ENCODE measurements at regions of chr5 and their contacts with region 1.

Region 1: GRCh38 chr5:151051066-151051930 is 29.5 kb downstream of the TNIP1 start:
- DNase-seq: peak; percentile 81 to 90 (median 87)
- H3K4me3 ChIP-seq: no peak overlapping the region
- H3K27ac ChIP-seq: no peak overlapping the region
- H3K4me1 ChIP-seq: no peaks in the 10 kb centered on the region
- H3K27me3 ChIP-seq: no peaks in the 10 kb centered on the region
- CTCF ChIP-seq: peak; percentile 70 to 95 (median 81)
- EP300 ChIP-seq: no peak
- POLR2A ChIP-seq: no peak

Region 2: DNA sequence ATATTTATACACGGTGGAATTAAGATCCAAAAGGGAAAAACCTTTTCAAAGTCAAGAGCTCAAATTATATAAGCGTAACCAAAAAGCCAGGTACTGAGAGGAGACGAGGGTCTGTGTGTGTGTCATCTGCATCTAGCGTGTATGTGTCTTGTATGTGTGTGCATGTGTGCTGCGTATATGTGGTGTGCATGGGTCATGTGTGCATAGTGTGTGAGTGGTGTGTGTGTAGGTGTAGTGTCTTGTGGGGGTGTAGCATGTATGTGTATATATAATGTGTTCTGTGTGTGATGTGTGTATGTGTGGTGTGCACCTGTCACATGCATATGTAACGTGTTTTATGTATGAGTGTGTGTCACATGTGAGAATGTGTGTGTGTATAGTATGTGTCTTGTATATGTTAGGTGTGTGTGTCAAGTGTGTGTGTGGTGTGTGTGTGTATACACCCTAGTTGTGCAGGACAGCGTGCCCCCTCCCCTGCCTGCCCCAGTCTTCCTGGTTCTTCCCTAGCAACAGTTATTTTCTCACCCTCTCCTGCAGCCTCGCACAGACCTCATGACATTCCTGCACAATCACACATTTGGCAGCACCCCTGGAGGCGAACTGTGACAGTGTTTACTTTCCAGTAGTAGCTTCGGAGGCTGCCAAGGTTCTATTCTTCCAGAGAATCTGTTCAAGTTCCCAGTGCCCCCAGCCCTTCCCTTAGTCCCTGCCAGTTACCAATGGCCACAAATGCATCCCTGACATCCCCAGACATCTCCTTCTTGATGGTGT is 56.6 kb after region 1 on chr5:
- intact Hi-C with region 1: loop called in 2 of 4 experiments (anchors 2 to 5 kb)
- DNase-seq: no peak
- H3K4me3 ChIP-seq: no peak overlapping the region
- H3K27ac ChIP-seq: no peak overlapping the region
- H3K4me1 ChIP-seq: peaks cover 18% of the 10 kb centered on the region
- H3K27me3 ChIP-seq: no peaks in the 10 kb centered on the region
- CTCF ChIP-seq: no peak
- EP300 ChIP-seq: no peak
- POLR2A ChIP-seq: no peak

Region 3: DNA sequence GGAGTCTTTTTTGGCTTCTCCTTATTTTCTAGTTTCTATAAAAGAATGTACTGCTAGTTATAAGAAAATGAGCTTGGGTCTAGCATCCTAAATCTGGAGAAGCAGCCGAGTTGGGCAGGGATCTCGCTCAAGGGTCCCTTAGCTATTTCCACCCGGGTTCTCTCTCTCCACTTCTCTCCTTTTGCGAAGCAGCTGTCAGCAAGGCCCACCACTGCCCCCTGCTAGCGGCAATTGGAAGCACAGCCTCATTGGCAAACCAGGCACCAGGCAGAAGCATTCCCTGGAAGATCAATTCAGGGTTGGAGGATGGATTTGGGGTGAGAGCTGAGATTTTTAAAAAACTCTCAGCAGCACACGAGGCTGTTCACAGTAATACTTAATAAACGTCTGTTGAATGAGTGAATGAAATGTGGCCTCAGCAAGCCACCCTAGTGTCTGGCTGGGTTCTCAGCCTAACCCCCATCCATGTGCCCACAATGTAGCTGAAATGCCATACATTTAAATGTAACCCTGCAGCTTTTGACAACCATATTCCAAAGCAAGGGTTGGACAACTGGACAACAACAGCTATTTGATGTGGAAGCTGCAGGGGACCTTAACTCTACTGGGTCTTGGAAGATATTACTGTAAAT is 64.1 kb after region 1 on chr5:
- intact Hi-C with region 1: loop called (anchors 2 to 5 kb)
- DNase-seq: peak; percentile 65 to 86 (median 83)
- H3K4me3 ChIP-seq: no peak overlapping the region
- H3K27ac ChIP-seq: no peak overlapping the region
- H3K4me1 ChIP-seq: no peaks in the 10 kb centered on the region
- H3K27me3 ChIP-seq: no peaks in the 10 kb centered on the region
- CTCF ChIP-seq: peak; percentile 76 to 95 (median 86)
- EP300 ChIP-seq: no peak
- POLR2A ChIP-seq: peak; percentile 23

Region 4: DNA sequence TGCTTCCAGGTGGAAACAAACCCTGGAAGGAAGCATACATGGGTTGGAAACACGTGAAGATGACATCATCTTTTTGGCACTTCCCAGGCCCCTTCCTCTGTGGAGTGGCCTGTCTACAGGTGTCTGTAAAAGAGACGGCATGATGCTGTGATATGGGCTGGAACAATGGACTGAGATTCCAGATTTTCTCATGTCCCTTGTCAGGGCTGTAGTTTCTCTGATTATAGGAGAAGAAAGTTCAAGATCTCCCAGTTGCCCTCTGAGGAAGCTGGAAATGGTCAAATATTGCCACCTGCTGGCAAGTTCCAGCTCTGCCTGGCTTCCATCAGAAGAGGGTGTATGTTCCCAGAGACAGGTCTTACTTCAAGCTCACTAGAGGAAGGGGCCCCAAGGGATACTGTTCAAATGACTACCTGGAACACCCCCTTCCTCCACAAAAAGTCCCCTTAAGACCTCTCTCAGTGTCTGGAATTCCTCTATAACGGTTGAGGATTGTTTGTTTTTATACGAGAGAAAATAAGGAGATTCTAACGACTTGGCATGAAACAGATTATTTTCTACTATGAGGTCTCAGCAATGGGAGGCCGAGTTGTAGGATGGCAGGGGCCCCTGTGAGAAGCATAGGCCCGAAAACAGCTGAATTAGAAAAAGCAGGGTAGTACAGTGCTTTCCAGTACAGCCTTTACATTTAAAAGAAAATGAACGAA is 113.5 kb after region 1 on chr5:
- intact Hi-C with region 1: loop called in 3 of 4 experiments (anchors 5 to 10 kb)
- DNase-seq: peak; percentile 69 to 85 (median 82)
- H3K4me3 ChIP-seq: no peak overlapping the region
- H3K27ac ChIP-seq: no peak overlapping the region
- H3K4me1 ChIP-seq: peaks cover 8% of the 10 kb centered on the region
- H3K27me3 ChIP-seq: no peaks in the 10 kb centered on the region
- CTCF ChIP-seq: peak; percentile 56 to 93 (median 85)
- EP300 ChIP-seq: no peak
- POLR2A ChIP-seq: no peak

Region 5: GRCh38 chr5:151239237-151239861 is 188.1 kb after region 1 on chr5:
- intact Hi-C with region 1: loop called in 1 of 4 experiments (anchors 5 kb)
- DNase-seq: peak; percentile 81 to 91 (median 89)
- H3K4me3 ChIP-seq: peak overlapping the region; percentile 27
- H3K27ac ChIP-seq: peak overlapping the region in 1 of 2 donors; percentile 52
- H3K4me1 ChIP-seq: peaks cover 7% of the 10 kb centered on the region
- H3K27me3 ChIP-seq: no peaks in the 10 kb centered on the region
- CTCF ChIP-seq: peak; percentile 61 to 85 (median 78)
- EP300 ChIP-seq: no peak
- POLR2A ChIP-seq: no peak

Region 6: DNA sequence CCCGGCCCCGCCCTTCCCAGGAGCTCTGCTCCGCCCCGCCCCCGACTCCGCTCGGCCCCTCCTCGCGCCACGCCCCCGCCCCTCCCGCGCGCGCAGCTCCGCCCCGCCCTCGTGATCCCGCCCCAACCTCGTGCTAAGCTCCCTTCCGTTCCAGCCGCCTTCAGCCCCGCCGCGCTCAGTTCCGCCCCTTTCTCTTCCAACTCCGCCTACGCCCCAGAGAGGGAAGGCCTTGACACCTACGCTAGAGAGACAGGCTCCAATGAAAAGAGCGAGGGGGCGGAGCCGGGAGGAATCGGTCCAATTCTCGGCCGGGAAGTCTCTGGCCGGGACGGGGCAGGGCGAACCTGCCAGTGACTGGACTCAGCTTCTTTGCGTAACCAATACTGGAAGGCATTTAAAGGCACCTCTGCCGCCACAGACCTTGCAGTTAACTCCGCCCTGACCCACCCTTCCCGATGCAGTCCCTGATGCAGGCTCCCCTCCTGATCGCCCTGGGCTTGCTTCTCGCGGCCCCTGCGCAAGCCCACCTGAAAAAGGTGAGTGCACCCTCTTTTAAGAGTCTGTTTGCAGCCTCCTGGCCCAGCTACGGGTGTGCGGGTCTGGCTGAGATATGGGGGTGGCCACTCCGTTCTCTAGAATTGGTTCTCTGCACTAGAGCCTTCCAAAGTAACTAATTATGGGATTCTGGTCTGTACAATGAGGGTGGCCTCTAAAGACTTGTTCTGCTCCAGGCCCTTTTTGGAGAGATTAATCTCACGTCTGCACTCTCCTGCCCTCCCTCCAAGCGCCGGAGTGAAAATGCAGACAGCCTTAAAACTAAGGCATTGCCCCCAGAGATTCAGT is 201.7 kb after region 1 on chr5 and contains the start of gene GM2A:
- intact Hi-C with region 1: no loop called
- DNase-seq: peak; percentile 99
- H3K4me3 ChIP-seq: peak within 1 kb of the TSS; percentile 71
- H3K27ac ChIP-seq: peak within 1 kb of the TSS in 1 of 2 donors; percentile 51
- H3K4me1 ChIP-seq: peaks cover 4% of the 10 kb centered on the region
- H3K27me3 ChIP-seq: no peaks in the 10 kb centered on the region
- CTCF ChIP-seq: no peak
- EP300 ChIP-seq: peak; percentile 46
- POLR2A ChIP-seq: peak; percentile 16
- total RNA-seq, gene GM2A: 14.7 to 38.5 (median 28.6) TPM

Measured in ovary (tissue), 10 donors.